ENCODE measurements at regions of chr15 and their contacts with region 1.

Region 1: DNA sequence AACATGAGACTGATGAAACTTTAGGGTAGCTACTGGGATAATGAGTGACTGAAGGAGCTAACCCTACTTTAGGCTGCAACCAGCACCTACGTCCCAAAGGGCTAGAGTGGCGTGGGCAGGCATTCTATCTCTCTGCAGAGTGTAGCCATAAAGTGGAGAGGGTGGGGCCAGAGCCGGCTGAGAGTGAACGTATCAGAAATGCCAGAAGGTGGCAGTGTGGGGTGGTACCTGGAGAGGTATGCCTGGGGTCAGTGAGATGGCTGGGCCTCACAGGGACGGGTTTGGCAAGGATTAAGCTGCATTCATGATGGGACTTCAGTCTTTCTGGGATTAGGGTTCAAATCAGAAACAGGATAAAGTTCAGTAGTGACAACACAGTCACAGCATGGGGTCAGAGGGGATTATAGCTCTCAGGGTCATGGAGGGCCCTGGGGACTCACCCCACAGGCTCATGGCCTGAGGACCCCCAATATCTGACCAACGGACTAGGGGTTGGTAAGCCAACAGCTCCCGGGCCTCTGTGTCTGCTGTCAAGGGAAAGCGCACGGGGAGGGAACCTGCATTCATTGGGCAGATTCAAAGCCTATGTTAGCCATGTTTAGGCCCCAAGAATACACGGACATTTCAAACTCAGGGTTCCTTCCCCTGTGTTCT is 86.5 kb upstream of the FOXB1 start:
- DNase-seq: peak; percentile 61 to 73
- ATAC-seq: peak; percentile 94 to 99
- H3K4me3 ChIP-seq: no peak overlapping the region
- H3K27ac ChIP-seq: no peak overlapping the region
- H3K4me1 ChIP-seq: no peaks in the 10 kb centered on the region
- CTCF ChIP-seq: peak; percentile 61
- EP300 ChIP-seq: no peak
- POLR2A ChIP-seq: no peak
- RAD21 ChIP-seq: peak; percentile 64 to 78

Region 2: GRCh38 chr15:59892995-59893394 is 24.6 kb before region 1 on chr15:
- CTCF ChIA-PET with region 1: interaction called, 18 read pairs
- POLR2A ChIA-PET with region 1: no interaction called
- DNase-seq: no peak
- ATAC-seq: peak in 1 of 2 experiments; percentile 29; a peak in 1 of 6 replicates
- H3K4me3 ChIP-seq: no peak overlapping the region
- H3K27ac ChIP-seq: no peak overlapping the region
- H3K4me1 ChIP-seq: no peaks in the 10 kb centered on the region
- CTCF ChIP-seq: no peak
- EP300 ChIP-seq: no peak
- POLR2A ChIP-seq: no peak
- RAD21 ChIP-seq: no peak

Region 3: DNA sequence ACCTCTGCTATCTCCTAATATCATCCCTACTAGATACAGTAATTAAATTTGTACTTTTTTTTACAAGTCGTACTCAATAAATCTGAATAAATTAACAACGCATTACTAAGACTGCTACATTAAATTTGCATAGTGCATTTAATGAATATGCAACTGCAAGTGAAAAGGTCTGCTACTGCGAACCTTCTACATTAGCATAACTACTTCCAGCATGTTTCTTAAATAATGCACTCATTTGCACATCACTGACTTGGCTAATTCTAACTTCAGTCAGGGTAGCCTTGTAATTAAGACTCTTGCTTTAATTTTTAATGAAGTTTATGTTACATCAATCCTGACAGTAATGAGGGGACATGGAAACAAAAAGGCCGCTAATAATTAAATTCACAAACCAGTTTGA is 12.5 kb before region 1 on chr15:
- CTCF ChIA-PET with region 1: interaction called, 19 read pairs
- POLR2A ChIA-PET with region 1: no interaction called
- DNase-seq: no peak
- ATAC-seq: no peak
- H3K4me3 ChIP-seq: no peak overlapping the region
- H3K27ac ChIP-seq: no peak overlapping the region
- H3K4me1 ChIP-seq: no peaks in the 10 kb centered on the region
- CTCF ChIP-seq: no peak
- EP300 ChIP-seq: no peak
- POLR2A ChIP-seq: no peak
- RAD21 ChIP-seq: no peak

Region 4: GRCh38 chr15:59933607-59934006 is 16.0 kb after region 1 on chr15:
- CTCF ChIA-PET with region 1: interaction called, 14 read pairs
- POLR2A ChIA-PET with region 1: no interaction called
- DNase-seq: no peak
- ATAC-seq: no peak
- H3K4me3 ChIP-seq: no peak overlapping the region
- H3K27ac ChIP-seq: no peak overlapping the region
- H3K4me1 ChIP-seq: no peaks in the 10 kb centered on the region
- CTCF ChIP-seq: no peak
- EP300 ChIP-seq: no peak
- POLR2A ChIP-seq: no peak
- RAD21 ChIP-seq: no peak

Region 5: GRCh38 chr15:60052796-60053195 is 135.2 kb after region 1 on chr15:
- CTCF ChIA-PET with region 1: no interaction called
- POLR2A ChIA-PET with region 1: no interaction called
- DNase-seq: no peak
- ATAC-seq: no peak
- H3K4me3 ChIP-seq: no peak overlapping the region
- H3K27ac ChIP-seq: no peak overlapping the region
- H3K4me1 ChIP-seq: no peaks in the 10 kb centered on the region
- CTCF ChIP-seq: no peak
- EP300 ChIP-seq: no peak
- POLR2A ChIP-seq: no peak
- RAD21 ChIP-seq: no peak

Region 6: GRCh38 chr15:60128000-60128376 is 210.4 kb after region 1 on chr15:
- CTCF ChIA-PET with region 1: interaction called, 15 read pairs
- POLR2A ChIA-PET with region 1: no interaction called
- DNase-seq: no peak
- ATAC-seq: peak; percentile 41 to 45; a peak in 4 of 6 replicates
- H3K4me3 ChIP-seq: peak overlapping the region; percentile 50
- H3K27ac ChIP-seq: peak overlapping the region; percentile 48 to 72
- H3K4me1 ChIP-seq: no peaks in the 10 kb centered on the region
- CTCF ChIP-seq: no peak
- EP300 ChIP-seq: no peak
- POLR2A ChIP-seq: no peak
- RAD21 ChIP-seq: no peak